Colonic mucosa (tissue), 4 donors: ENCODE measurements at regions of chr4 and their contacts with region 1.

Region 1: DNA sequence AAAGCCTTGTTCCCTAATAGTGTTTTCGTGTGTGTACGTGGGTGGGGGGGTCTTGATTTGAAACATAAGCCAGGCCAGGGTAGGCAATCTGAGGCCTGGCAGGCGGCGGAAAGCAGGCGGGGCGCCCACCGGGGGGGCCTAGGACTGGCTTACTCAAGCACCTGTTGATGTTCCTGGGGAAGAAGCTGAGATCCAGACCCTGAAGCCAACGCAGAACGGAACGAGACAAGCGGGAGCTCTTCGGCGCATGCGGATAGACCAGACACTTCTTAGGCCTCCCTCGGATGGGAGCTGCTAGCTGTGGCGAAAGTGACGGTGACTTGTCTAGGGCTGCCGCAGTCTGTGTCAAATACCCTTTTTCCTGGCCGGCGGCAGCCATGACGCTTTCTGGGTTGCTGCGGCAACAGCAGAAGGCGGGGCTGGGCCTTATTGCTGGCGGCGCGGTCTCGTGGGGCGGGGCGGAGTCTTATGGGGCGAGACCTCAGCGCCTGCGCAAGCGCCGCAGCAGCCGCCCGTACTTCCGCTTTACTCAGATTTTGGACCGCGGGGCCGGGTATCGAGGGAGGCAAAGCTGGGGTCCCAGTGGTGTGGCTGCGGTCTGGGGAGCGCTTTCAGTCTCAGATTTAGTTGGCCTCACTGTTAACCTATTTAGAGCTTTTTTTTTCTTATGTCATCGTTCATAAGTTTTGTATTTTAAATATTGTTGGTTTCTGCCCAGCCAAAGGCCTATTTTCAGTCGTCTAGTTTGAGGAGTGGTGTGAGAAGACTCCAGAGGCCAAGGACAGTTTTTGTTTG is at the start of gene SPATA4:
- DNase-seq: peak; percentile 94
- H3K4me3 ChIP-seq: peak within 1 kb of the TSS; percentile 46
- H3K27ac ChIP-seq: peak within 1 kb of the TSS; percentile 14
- H3K4me1 ChIP-seq: no peaks in the 10 kb centered on the region
- H3K27me3 ChIP-seq: no peaks in the 10 kb centered on the region
- CTCF ChIP-seq: no peak
- total RNA-seq, gene SPATA4: not detected

Region 2: GRCh38 chr4:174910271-174910670 is 1285.1 kb before region 1 on chr4:
- intact Hi-C with region 1: no loop called
- DNase-seq: no peak
- H3K4me3 ChIP-seq: no peak overlapping the region
- H3K27ac ChIP-seq: no peak overlapping the region
- H3K4me1 ChIP-seq: no peaks in the 10 kb centered on the region
- H3K27me3 ChIP-seq: no peaks in the 10 kb centered on the region
- CTCF ChIP-seq: no peak

Region 3: GRCh38 chr4:175983636-175984035 is 211.7 kb before region 1 on chr4:
- intact Hi-C with region 1: no loop called
- DNase-seq: no peak
- H3K4me3 ChIP-seq: no peak overlapping the region
- H3K27ac ChIP-seq: no peak overlapping the region
- H3K4me1 ChIP-seq: no peaks in the 10 kb centered on the region
- H3K27me3 ChIP-seq: no peaks in the 10 kb centered on the region
- CTCF ChIP-seq: no peak

Region 4: DNA sequence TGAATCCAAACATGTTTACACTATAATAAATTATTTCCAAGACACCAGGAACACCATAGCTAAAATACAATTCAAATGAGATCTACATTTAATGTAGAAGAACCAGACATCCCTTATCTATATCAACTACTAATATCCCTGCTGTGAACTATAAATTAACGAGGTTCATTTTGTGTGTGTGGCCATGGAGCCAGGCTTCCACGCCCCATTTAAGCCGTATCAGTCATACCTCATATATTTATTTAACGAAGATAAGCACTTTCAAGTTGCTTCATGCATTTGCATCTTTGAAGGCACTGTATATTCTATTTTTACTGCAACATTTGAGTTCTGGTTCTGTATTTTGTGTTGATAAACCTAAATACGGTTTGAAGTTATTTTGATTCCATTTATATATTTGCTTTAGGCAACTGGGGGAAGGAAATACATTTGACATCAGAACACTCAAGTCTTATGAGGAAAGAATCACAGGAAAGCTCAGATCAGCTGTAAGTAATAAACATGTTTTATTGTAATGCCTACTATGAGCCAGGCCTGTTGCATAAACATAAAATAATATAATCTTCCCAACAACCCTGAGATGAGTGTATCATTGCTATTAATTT is 174.8 kb before region 1 on chr4:
- intact Hi-C with region 1: no loop called
- DNase-seq: no peak
- H3K4me3 ChIP-seq: no peak overlapping the region
- H3K27ac ChIP-seq: no peak overlapping the region
- H3K4me1 ChIP-seq: no peaks in the 10 kb centered on the region
- H3K27me3 ChIP-seq: no peaks in the 10 kb centered on the region
- CTCF ChIP-seq: no peak

Region 5: GRCh38 chr4:176319704-176320339 is 124.4 kb after region 1 on chr4 and contains the start of gene SPCS3:
- intact Hi-C with region 1: loop called (anchors 10 kb)
- DNase-seq: peak; percentile 97
- H3K4me3 ChIP-seq: peak within 1 kb of the TSS; percentile 76
- H3K27ac ChIP-seq: peak within 1 kb of the TSS; percentile 99
- H3K4me1 ChIP-seq: peaks cover 3% of the 10 kb centered on the region
- H3K27me3 ChIP-seq: no peaks in the 10 kb centered on the region
- CTCF ChIP-seq: no peak
- total RNA-seq, gene SPCS3: 116 to 147 TPM